AG04449 (cell line): ENCODE measurements at regions of chr7 and their contacts with region 1.

Region 1: DNA sequence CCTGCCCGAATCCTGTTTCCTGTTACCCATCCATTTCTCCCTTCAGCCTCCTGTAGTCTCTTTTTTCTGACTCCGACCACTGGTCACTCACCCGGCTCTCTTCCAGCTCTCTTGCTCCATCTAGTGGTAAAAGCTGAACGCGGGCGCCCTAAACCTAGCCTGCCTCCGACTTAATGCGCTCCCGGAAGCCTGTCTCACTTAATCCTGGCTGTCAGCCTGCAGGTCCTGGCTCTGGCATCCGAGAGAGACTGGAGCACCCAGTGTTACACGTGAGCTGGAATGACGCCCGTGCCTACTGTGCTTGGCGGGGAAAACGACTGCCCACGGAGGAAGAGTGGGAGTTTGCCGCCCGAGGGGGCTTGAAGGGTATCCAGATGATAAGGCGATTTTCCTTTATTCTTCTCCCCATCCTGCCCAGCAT is 10.3 kb downstream of the SUMF2 start:
- DNase-seq: no peak
- H3K4me3 ChIP-seq: no peak overlapping the region
- CTCF ChIP-seq: peak; percentile 86

Region 2: GRCh38 chr7:55641273-55641691 is 433.1 kb before region 1 on chr7:
- CTCF ChIA-PET with region 1: interaction called, 71 read pairs
- POLR2A ChIA-PET with region 1: no interaction called
- DNase-seq: peak; percentile 59
- H3K4me3 ChIP-seq: no peak overlapping the region
- CTCF ChIP-seq: peak; percentile 70

Region 3: GRCh38 chr7:55946545-55946944 is 127.8 kb before region 1 on chr7:
- CTCF ChIA-PET with region 1: no interaction called
- POLR2A ChIA-PET with region 1: no interaction called
- DNase-seq: no peak
- H3K4me3 ChIP-seq: no peak overlapping the region
- CTCF ChIP-seq: no peak

Region 4: DNA sequence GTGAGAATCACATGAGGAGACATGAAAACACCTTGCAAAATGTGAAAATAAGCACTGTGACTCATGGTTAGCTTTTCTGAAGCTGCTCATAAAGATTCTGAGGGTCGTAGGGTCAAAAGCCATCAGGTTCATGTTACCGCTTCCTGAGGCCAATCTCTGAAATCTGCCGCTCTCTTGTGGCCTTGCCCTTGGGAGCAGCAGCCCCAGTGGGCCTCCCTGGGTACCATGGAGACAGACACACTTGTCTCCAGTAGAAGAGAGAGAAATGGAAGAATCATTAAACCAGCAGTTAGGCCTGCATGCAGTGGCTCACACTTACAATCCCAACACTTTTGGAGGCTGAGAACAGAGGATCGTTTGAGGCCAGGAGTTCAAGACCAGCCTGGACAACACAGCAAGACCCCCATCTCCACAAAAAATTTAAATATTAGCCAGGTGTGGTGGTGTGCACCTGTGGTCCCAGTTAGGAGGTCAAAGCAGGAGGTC is 67.2 kb before region 1 on chr7:
- CTCF ChIA-PET with region 1: interaction called, 72 read pairs
- POLR2A ChIA-PET with region 1: interaction called, 6 read pairs
- DNase-seq: no peak
- H3K4me3 ChIP-seq: no peak overlapping the region
- CTCF ChIP-seq: no peak

Region 5: GRCh38 chr7:56051339-56052191 is 22.8 kb before region 1 on chr7 and contains the starts of genes CCT6A and PSPH:
- CTCF ChIA-PET with region 1: interaction called, 14 read pairs
- POLR2A ChIA-PET with region 1: interaction called, 7 read pairs
- DNase-seq: peak; percentile 86
- H3K4me3 ChIP-seq: peak within 1 kb of the TSS; percentile 93
- CTCF ChIP-seq: no peak

Region 6: GRCh38 chr7:56063882-56064625 is 10.3 kb before region 1 on chr7 and contains the start of gene SUMF2:
- CTCF ChIA-PET with region 1: interaction called, 31 read pairs
- POLR2A ChIA-PET with region 1: interaction called, 8 read pairs
- DNase-seq: no peak
- H3K4me3 ChIP-seq: peak within 1 kb of the TSS; percentile 96
- CTCF ChIP-seq: peak; percentile 19

Region 7: GRCh38 chr7:56087445-56087844 is 13.1 kb after region 1 on chr7:
- CTCF ChIA-PET with region 1: interaction called, 26 read pairs
- POLR2A ChIA-PET with region 1: interaction called, 4 read pairs
- DNase-seq: no peak
- H3K4me3 ChIP-seq: no peak overlapping the region
- CTCF ChIP-seq: no peak

Region 8: GRCh38 chr7:56092789-56093531 is 18.6 kb after region 1 on chr7 and contains the start of gene PHKG1:
- CTCF ChIA-PET with region 1: interaction called, 17 read pairs
- POLR2A ChIA-PET with region 1: interaction called, 4 read pairs
- DNase-seq: peak; percentile 44
- H3K4me3 ChIP-seq: no peak within 1 kb of the TSS
- CTCF ChIP-seq: peak; percentile 29